ENCODE measurements at regions of chr22 and their contacts with region 1.

Region 1: DNA sequence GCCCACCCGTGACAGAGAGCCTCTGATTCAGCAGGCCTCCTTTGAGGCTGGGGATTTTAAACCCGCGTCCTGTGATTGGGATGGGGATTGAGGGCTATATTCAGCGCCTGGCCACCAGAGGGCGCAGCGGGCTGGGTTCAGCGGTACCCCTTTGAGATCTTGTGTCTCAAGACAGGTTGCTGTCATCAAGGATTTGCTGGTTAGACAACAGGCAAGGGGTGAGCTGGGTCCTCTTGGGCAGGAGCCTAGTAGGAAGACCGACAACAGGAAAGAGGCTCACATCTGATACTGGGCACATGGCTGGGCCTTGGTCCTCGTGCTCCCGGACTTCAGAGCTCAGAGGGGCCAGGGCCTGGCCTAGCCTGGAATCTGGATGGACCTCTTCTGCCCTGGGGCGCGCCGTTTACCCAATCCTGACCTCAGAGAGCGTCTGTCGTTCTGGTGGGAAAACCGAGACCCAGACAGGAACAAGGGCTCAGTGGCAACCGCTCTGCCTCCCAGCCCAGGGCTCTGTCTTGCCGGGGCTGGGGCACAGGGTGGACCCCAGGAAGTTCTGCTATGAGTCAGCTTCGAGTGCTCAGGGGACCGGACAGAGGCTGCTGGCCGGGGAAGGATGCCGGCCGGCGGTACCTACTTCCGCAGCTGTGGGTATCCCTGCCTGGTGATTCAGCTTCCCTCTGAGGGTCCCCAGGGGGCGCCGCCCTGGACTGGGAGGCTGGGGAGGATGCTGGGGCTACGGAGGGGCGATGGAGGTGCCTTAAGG is 929 bp upstream of the SLC35E4 start:
- DNase-seq: peak in 1 of 2 donors; percentile 92
- H3K4me3 ChIP-seq: peak overlapping the region; percentile 57 to 82
- H3K27ac ChIP-seq: peak overlapping the region; percentile 98
- H3K4me1 ChIP-seq: peaks cover 37% of the 10 kb centered on the region
- H3K27me3 ChIP-seq: no peaks in the 10 kb centered on the region
- CTCF ChIP-seq: peak; percentile 88 to 99 (median 96)
- POLR2A ChIP-seq: no peak

Region 2: DNA sequence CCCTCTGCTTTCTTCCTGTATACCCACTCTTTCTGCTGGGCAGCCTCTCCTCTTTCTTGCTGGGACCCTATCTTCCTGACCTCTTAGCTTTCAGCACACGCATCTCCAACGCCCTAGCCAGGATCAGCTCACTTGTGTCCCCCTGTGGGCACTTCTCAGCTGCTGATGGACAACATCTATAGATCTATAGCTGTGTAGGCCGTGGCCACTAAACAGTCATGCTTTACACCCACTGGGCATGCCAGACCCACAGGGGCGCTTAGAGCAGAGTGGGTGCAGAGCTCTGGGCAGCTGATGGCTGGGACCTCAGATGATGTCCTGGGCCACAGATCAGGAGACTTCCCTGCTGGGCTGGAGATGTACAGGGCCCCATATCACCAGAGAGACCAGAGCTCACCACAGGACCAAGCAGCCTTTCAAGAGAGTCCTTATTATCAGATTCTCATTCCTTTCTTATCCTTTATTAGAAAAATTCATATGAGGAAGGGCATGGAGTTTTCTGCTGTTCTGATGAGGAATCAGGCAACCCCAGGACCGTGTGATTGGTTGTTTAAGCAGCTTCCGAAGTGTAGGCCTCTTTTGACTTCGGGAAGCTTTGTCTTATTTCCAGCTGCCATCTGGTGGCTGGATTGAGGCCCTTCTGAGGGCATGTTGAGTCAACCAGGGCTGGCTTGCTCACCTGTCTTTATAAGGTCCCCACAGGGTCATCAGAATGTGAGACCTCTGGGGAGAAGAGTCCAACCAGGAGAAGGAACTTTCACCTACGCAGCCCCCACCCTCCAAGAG is 120.5 kb after region 1 on chr22:
- intact Hi-C with region 1: loop called (anchors 10 kb)
- DNase-seq: no peak
- H3K4me3 ChIP-seq: no peak overlapping the region
- H3K27ac ChIP-seq: no peak overlapping the region
- H3K4me1 ChIP-seq: no peaks in the 10 kb centered on the region
- H3K27me3 ChIP-seq: no peaks in the 10 kb centered on the region
- CTCF ChIP-seq: peak; percentile 35 to 45 (median 44)
- POLR2A ChIP-seq: no peak

Region 3: DNA sequence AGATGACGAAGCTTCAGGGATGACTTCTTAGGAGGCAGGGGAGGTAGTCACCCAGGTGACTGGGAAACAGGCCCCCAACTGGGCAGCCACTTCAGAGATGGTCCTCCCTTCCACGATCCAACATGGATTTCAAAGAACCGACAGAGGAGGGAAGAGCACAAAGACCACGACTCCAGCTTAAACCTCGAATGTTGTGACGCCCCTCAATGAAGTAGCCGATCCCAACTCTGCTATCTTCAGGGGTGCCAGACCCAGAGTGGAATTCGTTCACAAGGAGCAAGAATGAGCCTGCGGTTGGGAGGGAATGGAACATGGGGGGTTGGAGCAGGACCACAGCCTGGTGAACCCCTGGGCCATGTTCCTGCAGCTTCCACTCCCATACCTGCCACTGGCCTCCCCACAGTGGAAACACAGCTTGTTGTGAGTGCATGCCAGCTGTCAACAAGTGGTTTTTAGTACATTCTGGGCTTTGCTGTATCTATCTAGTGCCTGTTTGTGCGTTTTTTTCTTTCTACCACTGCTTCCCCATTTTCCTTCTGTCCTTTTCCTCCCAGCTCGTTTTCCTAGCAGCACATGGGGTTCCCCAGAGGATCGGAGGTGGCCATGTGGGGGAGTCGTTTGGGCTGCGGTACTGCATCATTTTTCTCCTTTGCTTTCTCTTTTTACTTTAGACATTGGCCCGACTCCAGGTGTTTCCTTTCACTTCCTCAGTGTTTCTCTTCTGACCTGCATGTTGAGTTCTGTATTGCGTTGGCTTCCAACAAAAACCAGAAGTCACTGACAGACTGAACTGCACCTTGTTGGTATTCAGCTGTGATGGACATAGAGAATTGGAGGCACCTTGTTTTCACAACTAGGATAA is 268.1 kb after region 1 on chr22:
- intact Hi-C with region 1: no loop called
- DNase-seq: peak in 1 of 2 donors; percentile 52
- H3K4me3 ChIP-seq: no peak overlapping the region
- H3K27ac ChIP-seq: no peak overlapping the region
- H3K4me1 ChIP-seq: no peaks in the 10 kb centered on the region
- H3K27me3 ChIP-seq: no peaks in the 10 kb centered on the region
- CTCF ChIP-seq: no peak
- POLR2A ChIP-seq: no peak

Region 4: DNA sequence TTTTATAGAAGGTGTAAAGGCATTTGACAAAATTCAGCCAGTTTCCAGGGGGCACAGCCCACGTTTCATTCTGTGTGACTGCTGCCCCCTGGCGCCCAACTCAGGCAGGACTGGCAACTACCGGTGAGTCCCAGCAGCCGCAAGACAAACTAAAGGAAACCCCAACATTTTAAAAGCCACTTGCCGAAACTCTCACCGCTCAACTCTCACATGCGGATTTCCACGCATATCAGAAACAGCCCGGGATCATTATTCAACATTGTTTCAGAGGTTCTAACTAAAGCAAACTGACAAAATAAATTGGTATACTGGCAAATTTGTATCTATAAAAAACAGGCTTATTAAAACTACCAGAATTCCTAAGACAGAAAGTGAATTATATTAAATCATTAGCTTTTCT is 285.8 kb after region 1 on chr22:
- intact Hi-C with region 1: loop called (anchors 10 kb)
- DNase-seq: no peak
- H3K4me3 ChIP-seq: no peak overlapping the region
- H3K27ac ChIP-seq: no peak overlapping the region
- H3K4me1 ChIP-seq: peaks cover 14% of the 10 kb centered on the region
- H3K27me3 ChIP-seq: no peaks in the 10 kb centered on the region
- CTCF ChIP-seq: peak; percentile 33 to 91 (median 85)
- POLR2A ChIP-seq: no peak